ENCODE measurements at regions of chr3 and their contacts with region 1.

Region 1: GRCh38 chr3:33113772-33114621 is at the start of gene CRTAP:
- DNase-seq: peak; percentile 96
- H3K4me3 ChIP-seq: peak within 1 kb of the TSS; percentile 78 to 83
- H3K27ac ChIP-seq: peak within 1 kb of the TSS; percentile 95
- H3K4me1 ChIP-seq: no peaks in the 10 kb centered on the region
- H3K27me3 ChIP-seq: no peaks in the 10 kb centered on the region
- CTCF ChIP-seq: peak in 2 of 4 experiments; percentile 9 to 21
- POLR2A ChIP-seq: peak; percentile 37
- total RNA-seq, gene CRTAP: 182 to 229 TPM

Region 2: GRCh38 chr3:33096093-33096868 is 17.7 kb before region 1 on chr3:
- intact Hi-C with region 1: loop called (anchors 1 kb)
- DNase-seq: peak; percentile 19
- H3K4me3 ChIP-seq: peak overlapping the region; percentile 89 to 100
- H3K27ac ChIP-seq: peak overlapping the region; percentile 81 to 90
- H3K4me1 ChIP-seq: no peaks in the 10 kb centered on the region
- H3K27me3 ChIP-seq: no peaks in the 10 kb centered on the region
- CTCF ChIP-seq: no peak
- POLR2A ChIP-seq: no peak